A549 (cell line): ENCODE measurements at regions of chr6 and their contacts with region 1.

Region 1: DNA sequence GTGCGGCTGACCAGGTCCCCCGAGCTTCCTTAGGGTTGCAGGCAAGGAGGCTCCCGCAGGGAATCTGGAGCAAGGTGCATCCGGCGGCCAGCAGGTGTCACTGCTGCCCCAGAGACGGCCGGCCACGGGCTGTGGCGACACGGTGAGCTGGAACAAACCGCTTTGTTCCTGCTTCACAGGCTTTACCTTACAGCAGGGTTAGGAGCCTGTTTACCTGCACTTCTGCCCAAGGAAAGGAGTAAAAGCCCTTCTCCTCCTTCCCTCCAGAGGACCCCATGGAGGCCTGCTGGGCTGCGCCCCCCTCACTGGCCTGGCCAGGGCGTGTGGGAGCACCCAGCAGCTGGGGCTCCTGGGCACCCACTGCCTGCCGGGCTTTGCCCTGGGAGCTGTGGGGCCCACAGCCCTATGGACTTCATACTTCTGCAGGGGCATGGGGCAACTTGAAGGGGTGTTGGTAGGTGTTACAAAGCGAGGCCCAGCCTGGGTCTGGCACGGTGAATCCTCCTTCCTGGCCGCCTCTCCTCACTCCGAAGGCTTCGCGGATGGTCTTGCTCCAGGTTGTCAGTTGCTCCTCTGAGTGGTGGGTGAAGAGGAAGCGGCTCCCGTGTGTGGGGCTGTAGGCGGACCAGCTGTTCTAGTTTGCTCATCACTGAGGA is 88.4 kb downstream of the CDC5L start:
- DNase-seq: peak; percentile 67 to 76
- ATAC-seq: peak; percentile 89 to 98
- H3K4me3 ChIP-seq: no peak overlapping the region
- H3K27ac ChIP-seq: peak overlapping the region; percentile 57 to 85; a peak in 5 of 6 replicates
- H3K4me1 ChIP-seq: peaks cover 16% of the 10 kb centered on the region; the same call in 2 of the 3 replicates
- CTCF ChIP-seq: peak; percentile 82
- EP300 ChIP-seq: no peak
- POLR2A ChIP-seq: no peak
- RAD21 ChIP-seq: peak; percentile 92 to 95

Region 2: DNA sequence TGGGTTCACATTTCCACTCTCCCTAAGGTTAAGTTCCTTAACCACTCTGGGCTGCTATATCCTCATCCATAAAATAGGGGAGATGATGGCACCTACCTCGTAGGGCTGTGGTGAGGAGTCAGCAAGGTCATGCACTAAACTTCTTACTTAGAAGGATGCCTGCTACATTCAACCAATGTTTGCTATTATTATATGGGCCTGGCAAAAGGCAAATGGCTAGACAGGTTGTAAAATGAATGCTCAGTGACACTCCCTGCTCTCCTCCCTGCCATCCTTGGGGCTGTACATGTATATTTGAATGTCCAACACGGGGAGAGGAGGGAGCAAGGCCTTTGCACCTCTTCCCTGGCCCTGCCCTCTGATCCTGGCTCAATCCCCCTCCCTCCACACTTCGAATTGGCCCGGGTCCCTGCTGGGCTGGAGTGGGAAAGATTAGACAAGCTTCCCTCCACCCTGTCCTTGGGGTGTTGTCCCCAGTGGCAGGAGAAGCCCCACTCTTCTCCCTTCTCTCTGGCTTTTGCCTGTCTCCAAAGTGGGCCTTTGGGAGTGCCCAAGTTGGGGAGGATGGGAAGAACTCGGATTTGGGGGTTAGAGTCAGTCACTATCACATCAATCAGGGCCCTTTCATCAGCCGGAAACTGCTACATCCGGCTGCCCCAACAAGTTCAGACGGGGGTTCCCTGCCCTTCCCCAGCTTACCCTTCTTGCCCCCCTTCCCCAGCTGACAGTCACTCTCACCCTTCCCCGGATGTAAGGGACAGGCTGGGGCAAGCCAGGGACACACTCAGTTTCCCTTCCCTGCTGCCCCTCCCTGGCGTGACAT is 742.2 kb before region 1 on chr6:
- CTCF ChIA-PET with region 1: no interaction called
- POLR2A ChIA-PET with region 1: no interaction called
- DNase-seq: no peak
- ATAC-seq: no peak; a peak in 1 of 6 replicates
- H3K4me3 ChIP-seq: no peak overlapping the region
- H3K27ac ChIP-seq: no peak overlapping the region
- H3K4me1 ChIP-seq: no peaks in the 10 kb centered on the region
- CTCF ChIP-seq: no peak
- EP300 ChIP-seq: no peak
- POLR2A ChIP-seq: no peak
- RAD21 ChIP-seq: no peak

Region 3: GRCh38 chr6:44397424-44398164 is 78.3 kb before region 1 on chr6:
- CTCF ChIA-PET with region 1: no interaction called
- POLR2A ChIA-PET with region 1: no interaction called
- DNase-seq: no peak
- ATAC-seq: peak; percentile 62 to 71; a peak in 5 of 6 replicates
- H3K4me3 ChIP-seq: no peak overlapping the region
- H3K27ac ChIP-seq: no peak overlapping the region
- H3K4me1 ChIP-seq: no peaks in the 10 kb centered on the region
- CTCF ChIP-seq: no peak
- EP300 ChIP-seq: no peak
- POLR2A ChIP-seq: no peak
- RAD21 ChIP-seq: no peak

Region 4: GRCh38 chr6:44456070-44456965 is 19.6 kb before region 1 on chr6:
- CTCF ChIA-PET with region 1: interaction called, 85 read pairs
- POLR2A ChIA-PET with region 1: no interaction called
- DNase-seq: peak; percentile 43 to 48
- ATAC-seq: peak; percentile 62 to 83; a peak in 4 of 6 replicates
- H3K4me3 ChIP-seq: no peak overlapping the region
- H3K27ac ChIP-seq: no peak overlapping the region
- H3K4me1 ChIP-seq: peaks cover 16% of the 10 kb centered on the region; the same call in 2 of the 3 replicates
- CTCF ChIP-seq: peak; percentile 68
- EP300 ChIP-seq: no peak
- POLR2A ChIP-seq: no peak
- RAD21 ChIP-seq: peak; percentile 61 to 68

Region 5: GRCh38 chr6:44489910-44490604 is 14.2 kb after region 1 on chr6:
- CTCF ChIA-PET with region 1: interaction called, 26 read pairs
- POLR2A ChIA-PET with region 1: interaction called, 3 read pairs
- DNase-seq: peak; percentile 44 to 64
- ATAC-seq: peak; percentile 77 to 81
- H3K4me3 ChIP-seq: no peak overlapping the region
- H3K27ac ChIP-seq: peak overlapping the region; percentile 75 to 84
- H3K4me1 ChIP-seq: peaks cover 36% of the 10 kb centered on the region
- CTCF ChIP-seq: no peak
- EP300 ChIP-seq: no peak
- POLR2A ChIP-seq: no peak
- RAD21 ChIP-seq: no peak

Region 6: GRCh38 chr6:44504301-44504791 is 28.4 kb after region 1 on chr6:
- CTCF ChIA-PET with region 1: interaction called, 18 read pairs
- POLR2A ChIA-PET with region 1: no interaction called
- DNase-seq: no peak
- ATAC-seq: no peak
- H3K4me3 ChIP-seq: no peak overlapping the region
- H3K27ac ChIP-seq: no peak overlapping the region
- H3K4me1 ChIP-seq: no peaks in the 10 kb centered on the region
- CTCF ChIP-seq: no peak
- EP300 ChIP-seq: no peak
- POLR2A ChIP-seq: no peak
- RAD21 ChIP-seq: no peak

Region 7: GRCh38 chr6:44642870-44643529 is 167.1 kb after region 1 on chr6:
- CTCF ChIA-PET with region 1: interaction called, 42 read pairs
- POLR2A ChIA-PET with region 1: no interaction called
- DNase-seq: peak in 1 of 2 experiments; percentile 5
- ATAC-seq: peak in 1 of 2 experiments; percentile 47; a peak in 1 of 6 replicates
- H3K4me3 ChIP-seq: no peak overlapping the region
- H3K27ac ChIP-seq: no peak overlapping the region
- H3K4me1 ChIP-seq: no peaks in the 10 kb centered on the region
- CTCF ChIP-seq: no peak
- EP300 ChIP-seq: no peak
- POLR2A ChIP-seq: no peak
- RAD21 ChIP-seq: no peak

Region 8: DNA sequence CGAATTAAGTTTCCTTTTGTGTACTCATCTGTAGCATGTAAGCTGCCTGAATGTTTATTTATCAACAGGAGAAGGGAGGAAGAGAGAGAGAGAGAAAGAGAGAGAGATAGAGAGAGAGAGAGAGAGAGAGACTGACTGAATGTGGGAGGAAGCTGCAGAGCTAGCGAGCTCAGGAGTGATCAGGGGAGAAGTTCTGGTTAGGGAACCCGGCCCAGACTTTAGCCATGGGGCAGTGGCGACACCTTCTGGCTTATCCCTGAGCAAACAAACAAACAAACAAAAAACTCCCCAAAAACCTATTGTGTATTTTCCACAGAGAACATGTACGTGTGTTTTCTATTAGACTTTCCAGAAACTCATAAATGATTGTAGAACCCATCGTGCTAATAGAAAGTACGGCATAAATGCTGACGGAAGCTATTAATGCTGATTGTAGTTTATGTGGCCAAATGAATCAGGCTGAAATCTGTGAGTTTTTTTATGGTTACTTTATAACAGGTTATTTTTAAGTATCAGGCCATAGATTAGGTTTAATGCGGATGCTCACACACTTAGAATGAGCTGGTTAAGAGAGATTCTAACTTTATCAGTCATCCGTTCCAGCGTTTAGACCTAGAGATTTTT is 1446.9 kb after region 1 on chr6:
- CTCF ChIA-PET with region 1: interaction called, 35 read pairs
- POLR2A ChIA-PET with region 1: no interaction called
- DNase-seq: peak; percentile 4 to 33
- ATAC-seq: peak; percentile 63 to 73; a peak in 5 of 6 replicates
- H3K4me3 ChIP-seq: no peak overlapping the region
- H3K27ac ChIP-seq: no peak overlapping the region
- H3K4me1 ChIP-seq: no peaks in the 10 kb centered on the region
- CTCF ChIP-seq: peak; percentile 56
- EP300 ChIP-seq: no peak
- POLR2A ChIP-seq: no peak
- RAD21 ChIP-seq: peak; percentile 75 to 76